ENCODE measurements at regions of chr2 and their contacts with region 1.

Region 1: GRCh38 chr2:235746257-235747084 is 252.6 kb downstream of the AGAP1 start:
- DNase-seq: peak; percentile 80 to 87
- H3K4me3 ChIP-seq: no peak overlapping the region
- H3K27ac ChIP-seq: no peak overlapping the region
- H3K4me1 ChIP-seq: peaks cover 15% of the 10 kb centered on the region
- H3K27me3 ChIP-seq: no peaks in the 10 kb centered on the region
- CTCF ChIP-seq: peak; percentile 95

Region 2: DNA sequence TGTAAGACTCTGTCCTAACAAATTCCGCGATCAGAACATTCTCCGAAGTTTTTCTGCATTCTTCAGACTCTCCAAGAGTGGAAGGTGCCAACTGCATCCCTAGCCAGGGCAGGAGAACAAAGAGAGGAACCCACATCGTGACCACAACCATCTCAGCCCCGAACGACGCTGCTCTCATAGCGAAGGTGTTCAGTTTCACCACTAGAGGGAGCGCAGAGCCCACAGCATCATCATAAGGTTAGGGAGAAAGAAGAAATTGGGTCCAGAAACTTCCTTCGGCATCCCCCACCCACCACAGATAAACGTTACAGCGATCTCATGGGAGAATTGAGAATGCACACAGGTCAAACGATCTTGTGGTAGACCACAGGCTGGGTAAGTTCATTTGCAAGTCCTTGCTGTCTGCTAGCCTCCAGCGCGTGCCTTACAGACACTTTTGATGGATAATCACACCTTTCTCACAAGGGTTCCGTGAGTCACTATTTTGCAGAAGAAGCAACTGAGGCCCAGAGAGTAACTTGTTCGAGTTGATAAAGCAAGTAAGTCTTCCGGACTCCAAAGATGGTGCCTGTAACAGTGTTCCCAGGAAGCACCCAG is 1195.9 kb before region 1 on chr2:
- CTCF ChIA-PET with region 1: no interaction called
- POLR2A ChIA-PET with region 1: no interaction called
- intact Hi-C with region 1: loop called (anchors 10 kb)
- DNase-seq: peak; percentile 74 to 85
- H3K4me3 ChIP-seq: no peak overlapping the region
- H3K27ac ChIP-seq: no peak overlapping the region
- H3K4me1 ChIP-seq: peaks cover 11% of the 10 kb centered on the region
- H3K27me3 ChIP-seq: no peaks in the 10 kb centered on the region
- CTCF ChIP-seq: peak; percentile 99

Region 3: GRCh38 chr2:235116885-235117492 is 629.5 kb before region 1 on chr2:
- CTCF ChIA-PET with region 1: interaction called, 4 read pairs
- POLR2A ChIA-PET with region 1: interaction called, 3 read pairs
- intact Hi-C with region 1: loop called (anchors 5 kb)
- DNase-seq: peak in 1 of 2 experiments; percentile 55
- H3K4me3 ChIP-seq: no peak overlapping the region
- H3K27ac ChIP-seq: no peak overlapping the region
- H3K4me1 ChIP-seq: no peaks in the 10 kb centered on the region; the same call in 1 of the 2 replicates
- H3K27me3 ChIP-seq: no peaks in the 10 kb centered on the region
- CTCF ChIP-seq: peak; percentile 92

Region 4: DNA sequence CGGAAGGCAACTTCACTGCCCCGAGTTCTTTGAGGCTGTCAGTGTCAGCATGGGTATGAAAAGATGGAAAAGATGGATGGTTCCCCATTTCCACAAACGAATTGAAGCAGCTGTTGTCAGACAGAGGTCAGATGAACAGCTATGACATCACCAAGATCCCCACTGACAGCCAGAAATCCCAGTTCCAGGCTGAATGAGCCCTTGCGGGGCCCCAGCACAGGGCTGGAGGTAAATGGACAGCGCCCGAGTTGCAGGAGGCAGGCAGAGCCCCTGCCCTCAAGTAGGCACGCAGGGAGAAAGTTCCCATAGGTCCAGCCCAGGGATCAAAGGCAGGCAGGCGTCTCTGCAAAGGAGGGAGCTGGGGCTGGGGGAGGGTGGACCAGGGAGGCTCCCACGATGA is 422.1 kb before region 1 on chr2:
- CTCF ChIA-PET with region 1: interaction called, 4 read pairs
- POLR2A ChIA-PET with region 1: no interaction called
- intact Hi-C with region 1: loop called (anchors 10 kb)
- DNase-seq: no peak
- H3K4me3 ChIP-seq: no peak overlapping the region
- H3K27ac ChIP-seq: no peak overlapping the region
- H3K4me1 ChIP-seq: no peaks in the 10 kb centered on the region
- H3K27me3 ChIP-seq: no peaks in the 10 kb centered on the region
- CTCF ChIP-seq: no peak

Region 5: DNA sequence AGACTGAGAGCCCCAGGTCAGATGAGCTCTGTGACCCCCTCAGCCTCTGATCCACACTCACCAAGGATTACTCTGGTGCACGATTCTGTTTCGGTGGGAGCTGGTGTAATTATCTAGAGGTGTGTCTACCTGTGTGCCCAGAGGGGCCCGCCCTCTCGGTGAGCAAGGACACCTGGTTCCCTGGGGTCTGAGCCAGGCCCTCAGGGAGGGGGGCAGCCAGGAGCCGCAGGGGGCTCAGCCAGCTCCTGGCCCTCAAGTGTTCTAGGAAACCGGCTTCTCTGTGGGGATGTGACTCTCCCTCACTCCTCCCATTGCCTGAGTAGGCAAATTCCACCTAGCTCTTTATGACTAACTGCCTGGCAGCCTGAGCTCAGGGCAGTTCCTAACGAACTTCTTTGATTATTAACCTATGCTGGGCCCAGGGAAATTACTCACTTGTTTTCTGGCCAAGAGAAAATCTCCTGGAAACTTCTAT is 235.2 kb before region 1 on chr2:
- CTCF ChIA-PET with region 1: no interaction called
- POLR2A ChIA-PET with region 1: no interaction called
- intact Hi-C with region 1: no loop called
- DNase-seq: peak; percentile 69 to 84
- H3K4me3 ChIP-seq: no peak overlapping the region
- H3K27ac ChIP-seq: 0 out of 2 replicates have a peak overlapping the region, but pooled peaks have one; percentile 24
- H3K4me1 ChIP-seq: peaks cover 18% of the 10 kb centered on the region
- H3K27me3 ChIP-seq: no peaks in the 10 kb centered on the region
- CTCF ChIP-seq: no peak

Region 6: DNA sequence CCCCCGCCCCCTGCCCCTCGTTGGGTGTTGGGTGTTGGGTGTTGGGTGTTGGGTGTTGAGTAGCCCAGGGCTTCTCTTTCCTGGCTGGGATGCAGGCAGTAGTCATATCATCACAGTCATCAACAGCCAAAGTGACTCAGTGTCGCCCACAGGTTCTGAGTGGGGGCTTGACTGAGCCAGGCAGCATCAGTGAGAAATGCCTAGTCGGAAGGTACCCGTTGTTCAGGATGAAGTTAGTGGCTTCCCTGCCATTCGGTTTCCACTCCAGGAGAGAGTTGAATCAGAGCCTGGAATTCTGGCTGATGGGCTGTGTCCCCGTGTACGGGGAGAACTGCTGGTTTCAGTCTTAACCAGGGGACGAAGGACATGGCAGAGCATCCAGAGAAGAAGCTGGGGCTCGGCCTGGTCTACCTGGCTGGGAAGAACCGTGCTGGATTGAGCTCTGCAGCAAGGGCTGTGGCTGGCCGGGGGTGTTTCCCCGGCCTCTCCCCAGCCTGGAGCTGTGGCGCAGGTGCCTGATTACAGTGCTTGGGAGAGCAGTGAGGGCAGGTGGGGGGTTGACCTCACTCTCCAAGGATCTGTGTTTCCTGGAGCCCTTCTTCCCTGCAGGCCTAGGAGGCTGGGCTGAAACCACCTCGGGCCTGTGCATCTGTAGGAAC is 203.2 kb before region 1 on chr2:
- CTCF ChIA-PET with region 1: no interaction called
- POLR2A ChIA-PET with region 1: no interaction called
- intact Hi-C with region 1: loop called (anchors 2 kb)
- DNase-seq: peak; percentile 71 to 79
- H3K4me3 ChIP-seq: peak overlapping the region; percentile 49; the same call in 1 of the 2 replicates
- H3K27ac ChIP-seq: peak overlapping the region; percentile 91
- H3K4me1 ChIP-seq: peaks cover 58% of the 10 kb centered on the region
- H3K27me3 ChIP-seq: no peaks in the 10 kb centered on the region
- CTCF ChIP-seq: no peak

Region 7: GRCh38 chr2:235647877-235648276 is 98.6 kb before region 1 on chr2:
- CTCF ChIA-PET with region 1: interaction called, 17 read pairs
- POLR2A ChIA-PET with region 1: no interaction called
- intact Hi-C with region 1: no loop called
- DNase-seq: no peak
- H3K4me3 ChIP-seq: no peak overlapping the region
- H3K27ac ChIP-seq: no peak overlapping the region
- H3K4me1 ChIP-seq: 0 out of 2 replicates have a peak, but pooled peaks cover 8% of the 10 kb centered on the region
- H3K27me3 ChIP-seq: no peaks in the 10 kb centered on the region
- CTCF ChIP-seq: no peak

Region 8: DNA sequence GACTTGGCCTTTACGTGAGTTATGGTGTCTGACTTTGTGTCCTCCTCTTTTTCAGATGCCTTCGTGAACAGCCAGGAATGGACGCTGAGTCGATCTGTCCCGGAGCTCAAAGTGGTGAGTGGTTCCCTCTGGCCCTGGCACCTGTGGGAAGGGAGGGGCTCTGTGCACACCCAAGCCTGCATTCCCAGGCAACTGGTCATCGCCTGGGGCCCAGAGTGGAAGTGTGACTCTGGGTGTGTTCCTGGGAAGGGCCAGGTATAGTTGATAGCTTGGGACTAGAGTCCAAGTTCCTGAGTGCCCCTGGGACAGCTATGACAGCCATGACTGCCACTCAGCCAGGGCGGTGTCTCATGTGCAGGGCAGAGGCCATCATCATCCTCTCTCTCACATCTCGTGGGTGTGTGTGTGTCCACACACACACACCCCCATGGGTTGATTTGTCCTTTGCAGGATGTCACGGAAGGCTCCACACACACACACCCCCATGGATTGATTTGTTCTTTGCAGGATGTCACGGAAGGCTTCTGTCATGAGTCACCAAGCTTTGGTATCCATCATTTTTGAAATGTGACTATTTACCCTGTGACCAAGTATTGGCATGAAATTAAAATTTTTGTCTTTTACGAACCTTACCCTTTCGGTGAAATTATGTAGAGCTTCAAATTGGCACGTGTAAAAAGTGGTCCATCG is 37.2 kb before region 1 on chr2:
- CTCF ChIA-PET with region 1: interaction called, 13 read pairs
- POLR2A ChIA-PET with region 1: interaction called, 3 read pairs
- intact Hi-C with region 1: no loop called
- DNase-seq: peak; percentile 99 to 100
- H3K4me3 ChIP-seq: peak overlapping the region; percentile 9; the same call in 1 of the 2 replicates
- H3K27ac ChIP-seq: peak overlapping the region; percentile 96
- H3K4me1 ChIP-seq: peaks cover 57% of the 10 kb centered on the region
- H3K27me3 ChIP-seq: no peaks in the 10 kb centered on the region
- CTCF ChIP-seq: no peak

Region 9: DNA sequence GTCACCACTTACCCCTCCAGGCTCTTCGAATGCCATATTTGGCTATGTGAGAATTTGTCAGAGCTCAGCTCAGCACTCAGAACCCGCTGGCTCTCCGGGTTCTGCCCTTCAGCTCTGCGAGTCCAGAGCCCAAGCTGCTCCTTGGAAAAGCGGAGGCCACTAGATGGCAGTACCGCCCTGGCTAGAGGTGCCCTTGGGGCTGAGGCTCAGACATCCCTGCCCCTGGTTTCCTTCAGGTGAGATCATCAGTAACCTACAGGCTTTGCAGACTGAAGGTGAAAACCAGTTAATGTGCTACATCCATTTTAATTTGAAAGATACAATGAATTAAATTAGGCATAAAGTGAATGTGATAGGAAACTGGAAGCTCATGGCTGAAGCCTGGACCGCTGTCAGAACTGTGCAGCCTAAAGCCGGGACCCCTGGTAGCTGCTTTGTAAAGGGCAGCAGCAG is 33.0 kb after region 1 on chr2:
- CTCF ChIA-PET with region 1: no interaction called
- POLR2A ChIA-PET with region 1: no interaction called
- intact Hi-C with region 1: no loop called
- DNase-seq: peak; percentile 66 to 87
- H3K4me3 ChIP-seq: no peak overlapping the region
- H3K27ac ChIP-seq: no peak overlapping the region
- H3K4me1 ChIP-seq: no peaks in the 10 kb centered on the region
- H3K27me3 ChIP-seq: no peaks in the 10 kb centered on the region
- CTCF ChIP-seq: peak; percentile 93

Region 10: DNA sequence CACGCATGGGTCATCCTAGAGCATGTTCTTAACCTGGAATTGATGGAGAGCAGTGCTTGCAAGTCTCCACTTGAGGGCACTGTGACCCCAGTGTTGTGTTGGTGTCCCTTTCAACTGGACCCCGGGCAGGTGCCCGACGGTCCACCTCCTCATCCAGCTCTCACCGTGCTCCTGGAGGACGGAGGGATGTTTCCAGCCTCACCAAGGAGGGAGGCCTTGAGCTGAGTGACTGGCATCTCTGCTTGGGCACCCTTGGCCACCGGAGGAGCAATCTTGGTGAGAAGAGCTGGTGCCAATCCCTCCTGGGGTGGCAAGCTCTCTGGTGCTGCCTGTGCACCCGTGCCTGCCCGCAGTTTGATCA is 563.2 kb after region 1 on chr2:
- CTCF ChIA-PET with region 1: no interaction called
- POLR2A ChIA-PET with region 1: no interaction called
- intact Hi-C with region 1: no loop called
- DNase-seq: peak in 1 of 2 experiments; percentile 36
- H3K4me3 ChIP-seq: no peak overlapping the region
- H3K27ac ChIP-seq: no peak overlapping the region
- H3K4me1 ChIP-seq: no peaks in the 10 kb centered on the region
- H3K27me3 ChIP-seq: peaks cover 24% of the 10 kb centered on the region; the same call in 1 of the 2 replicates
- CTCF ChIP-seq: peak; percentile 73

Measured in PC-9 (cell line).